ENCODE measurements at regions of chr17 and their contacts with region 1.

Region 1: GRCh38 chr17:75904749-75905521 is at the start of gene MRPL38:
- DNase-seq: peak; percentile 96
- ATAC-seq: peak; percentile 95
- H3K4me3 ChIP-seq: peak within 1 kb of the TSS; percentile 88 to 100
- H3K27ac ChIP-seq: peak within 1 kb of the TSS; percentile 80
- H3K4me1 ChIP-seq: peaks cover 24 to 36% of the 10 kb centered on the region in 2 experiments
- H3K27me3 ChIP-seq: no peaks in the 10 kb centered on the region
- CTCF ChIP-seq: peak; percentile 98
- POLR2A ChIP-seq: peak; percentile 34
- RAD21 ChIP-seq: peak; percentile 100
- total RNA-seq, gene MRPL38: 219 TPM

Region 2: GRCh38 chr17:75877752-75878173 is 27.2 kb before region 1 on chr17:
- CTCF ChIA-PET with region 1: interaction called, 10 read pairs
- POLR2A ChIA-PET with region 1: interaction called, 4 read pairs
- RAD21 ChIA-PET with region 1: no interaction called
- intact Hi-C with region 1: no loop called
- DNase-seq: no peak
- ATAC-seq: peak; percentile 49
- H3K4me3 ChIP-seq: peak overlapping the region; percentile 69 to 81
- H3K27ac ChIP-seq: peak overlapping the region; percentile 99
- H3K4me1 ChIP-seq: peaks cover 44 to 62% of the 10 kb centered on the region in 2 experiments
- H3K27me3 ChIP-seq: no peaks in the 10 kb centered on the region
- CTCF ChIP-seq: peak in 2 of 3 experiments; percentile 37 to 49; a peak in 3 of 6 replicates
- POLR2A ChIP-seq: peak; percentile 13
- RAD21 ChIP-seq: no peak

Region 3: GRCh38 chr17:75940724-75941441 is 35.9 kb after region 1 on chr17 and contains the start of gene FBF1:
- CTCF ChIA-PET with region 1: interaction called, 5 read pairs
- POLR2A ChIA-PET with region 1: interaction called, 4 read pairs
- RAD21 ChIA-PET with region 1: no interaction called
- intact Hi-C with region 1: loop called (anchors 1 kb)
- DNase-seq: peak; percentile 94
- ATAC-seq: peak; percentile 99
- H3K4me3 ChIP-seq: peak within 1 kb of the TSS; percentile 67 to 88
- H3K27ac ChIP-seq: peak within 1 kb of the TSS; percentile 69
- H3K4me1 ChIP-seq: peaks cover 10 to 17% of the 10 kb centered on the region in 2 experiments
- H3K27me3 ChIP-seq: no peaks in the 10 kb centered on the region
- CTCF ChIP-seq: no peak
- POLR2A ChIP-seq: peak; percentile 97
- RAD21 ChIP-seq: no peak
- total RNA-seq, gene FBF1: 22.8 TPM

Region 4: DNA sequence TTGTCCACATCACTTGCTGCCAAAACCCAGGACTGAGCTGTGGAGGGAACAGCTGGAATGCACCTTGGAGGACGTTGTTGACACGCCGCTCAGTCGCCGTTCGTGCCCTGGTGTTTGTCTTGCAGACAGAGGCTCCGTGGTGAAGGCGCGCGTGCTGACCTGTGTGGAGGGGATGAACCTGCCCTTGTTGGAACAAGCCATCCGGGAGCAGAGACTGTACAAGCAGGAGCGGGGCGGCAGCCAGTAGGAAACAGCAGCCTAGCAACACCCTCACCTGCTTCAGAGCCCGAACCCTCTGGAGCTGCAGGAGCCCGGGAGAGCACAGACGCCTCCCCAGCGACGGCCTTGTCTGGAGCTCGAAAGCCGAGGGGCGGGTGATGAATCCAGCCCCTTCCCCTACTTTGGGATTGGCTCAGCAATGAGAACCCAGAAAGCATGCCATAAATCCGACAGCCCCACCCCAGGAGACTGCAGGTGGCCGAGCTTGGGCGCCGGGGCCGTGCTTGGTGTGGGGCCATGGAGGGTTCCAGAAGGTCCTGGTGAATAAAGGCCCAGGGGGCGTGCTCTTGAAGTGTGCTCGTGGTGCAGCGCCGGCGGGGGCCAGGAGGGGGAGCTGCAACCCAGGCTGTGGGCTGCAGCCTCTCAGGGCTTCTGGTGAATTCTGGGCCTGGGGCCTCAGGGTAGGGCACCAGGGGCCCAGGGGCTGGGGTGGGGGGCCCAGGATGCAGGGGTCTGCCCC is 95.2 kb after region 1 on chr17:
- CTCF ChIA-PET with region 1: interaction called, 68 read pairs
- POLR2A ChIA-PET with region 1: interaction called, 11 read pairs
- RAD21 ChIA-PET with region 1: interaction called, 5 to 7 read pairs
- intact Hi-C with region 1: loop called (anchors 1 kb)
- DNase-seq: peak; percentile 33
- ATAC-seq: peak; percentile 86
- H3K4me3 ChIP-seq: no peak overlapping the region
- H3K27ac ChIP-seq: peak overlapping the region; percentile 28; the same call in 1 of the 2 replicates
- H3K4me1 ChIP-seq: peaks cover 12 to 36% of the 10 kb centered on the region in 2 experiments
- H3K27me3 ChIP-seq: no peaks in the 10 kb centered on the region
- CTCF ChIP-seq: peak; percentile 93 to 99 (median 99)
- POLR2A ChIP-seq: no peak
- RAD21 ChIP-seq: peak; percentile 85

Region 5: DNA sequence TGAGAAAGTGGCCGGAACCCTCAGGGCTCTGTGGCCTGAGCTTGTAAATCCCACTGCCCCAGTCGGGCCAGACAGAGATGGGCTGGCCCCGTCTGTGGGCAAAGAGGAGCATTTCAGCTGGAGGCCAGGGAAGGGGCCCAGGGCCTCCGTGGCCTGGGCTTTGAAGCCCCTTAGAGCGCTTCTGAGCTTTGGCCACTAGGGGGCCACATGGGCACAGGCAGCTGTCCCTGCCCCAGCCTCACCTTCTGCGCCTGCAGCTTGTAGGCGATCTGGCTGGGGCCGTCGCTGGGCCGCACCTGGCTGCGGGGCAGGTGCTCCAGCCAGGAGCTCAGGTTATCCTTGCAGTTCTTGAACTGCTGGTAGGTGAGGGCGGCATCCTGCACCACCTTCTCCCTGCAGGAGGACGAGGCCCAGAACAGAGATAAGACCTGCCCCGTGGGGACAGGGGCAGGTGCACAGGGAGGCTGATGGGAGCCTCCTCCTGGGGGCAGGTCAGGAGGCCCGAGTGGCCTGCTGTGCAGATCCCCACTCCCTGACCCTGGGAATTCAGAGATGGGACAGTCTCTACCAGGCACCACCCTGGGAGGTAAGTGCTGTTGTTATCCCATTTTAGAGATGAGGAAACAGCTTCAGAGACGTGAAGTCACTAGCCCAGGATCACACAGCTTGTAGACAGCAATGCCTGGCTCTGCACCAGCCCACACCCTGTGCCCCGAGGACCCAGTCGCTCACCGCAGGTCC is 109.4 kb after region 1 on chr17:
- CTCF ChIA-PET with region 1: interaction called, 68 read pairs
- POLR2A ChIA-PET with region 1: no interaction called
- RAD21 ChIA-PET with region 1: no interaction called
- intact Hi-C with region 1: no loop called
- DNase-seq: peak; percentile 46
- ATAC-seq: peak; percentile 94
- H3K4me3 ChIP-seq: no peak overlapping the region
- H3K27ac ChIP-seq: peak overlapping the region; percentile 12; the same call in 1 of the 2 replicates
- H3K4me1 ChIP-seq: peaks cover 0 to 3% of the 10 kb centered on the region in 2 experiments; a peak in 1 of 4 replicates
- H3K27me3 ChIP-seq: no peaks in the 10 kb centered on the region
- CTCF ChIP-seq: peak; percentile 92 to 99 (median 98)
- POLR2A ChIP-seq: no peak
- RAD21 ChIP-seq: peak; percentile 98

Region 6: GRCh38 chr17:76246080-76247066 is 341.4 kb after region 1 on chr17:
- CTCF ChIA-PET with region 1: no interaction called
- POLR2A ChIA-PET with region 1: no interaction called
- RAD21 ChIA-PET with region 1: no interaction called
- intact Hi-C with region 1: no loop called
- DNase-seq: no peak
- ATAC-seq: no peak
- H3K4me3 ChIP-seq: no peak overlapping the region
- H3K27ac ChIP-seq: no peak overlapping the region
- H3K4me1 ChIP-seq: peaks cover 0 to 13% of the 10 kb centered on the region in 2 experiments; a peak in 3 of 4 replicates
- H3K27me3 ChIP-seq: no peaks in the 10 kb centered on the region
- CTCF ChIP-seq: no peak
- POLR2A ChIP-seq: no peak
- RAD21 ChIP-seq: no peak

Region 7: DNA sequence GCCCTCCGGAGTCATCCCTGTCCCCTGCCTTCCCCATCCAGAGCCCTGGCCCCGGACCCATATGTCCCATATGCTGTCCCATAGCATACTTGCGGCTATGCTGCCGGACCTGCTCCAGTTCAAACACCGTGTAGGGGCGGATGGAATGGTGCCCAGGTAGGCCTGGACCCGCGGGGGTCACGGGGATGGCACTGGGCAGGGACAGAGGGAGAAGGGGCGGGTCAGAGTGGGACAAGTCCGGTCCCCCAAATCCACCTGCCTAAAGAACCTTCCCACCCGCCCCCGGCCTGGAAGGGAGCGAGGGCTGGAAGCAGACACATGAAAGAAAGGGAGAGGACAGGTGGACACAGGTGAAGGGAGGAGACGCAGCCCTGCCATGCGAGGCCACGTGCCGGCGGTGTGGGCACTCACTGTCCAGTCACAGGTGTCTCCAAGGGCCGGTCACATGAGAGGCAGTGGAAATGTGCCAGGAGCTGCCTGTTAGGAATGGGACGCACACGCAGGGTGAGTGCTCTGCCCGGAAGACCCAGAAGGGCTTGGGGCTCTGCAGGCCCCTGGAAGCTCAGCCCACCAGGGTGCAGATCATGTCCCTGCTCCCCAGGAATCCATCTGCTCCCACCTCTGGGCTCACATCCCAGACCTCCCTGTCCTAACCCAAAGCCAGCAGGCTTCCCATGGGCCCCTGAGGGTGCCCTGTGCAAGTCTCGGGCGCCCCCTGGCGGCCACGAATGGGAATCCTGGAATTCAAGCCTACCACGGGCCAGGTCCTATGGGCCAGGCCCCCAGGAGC is 374.2 kb after region 1 on chr17:
- CTCF ChIA-PET with region 1: interaction called, 10 read pairs
- POLR2A ChIA-PET with region 1: no interaction called
- RAD21 ChIA-PET with region 1: no interaction called
- intact Hi-C with region 1: loop called (anchors 1 kb)
- DNase-seq: peak; percentile 62
- ATAC-seq: peak; percentile 98
- H3K4me3 ChIP-seq: no peak overlapping the region
- H3K27ac ChIP-seq: no peak overlapping the region; the same call in 1 of the 2 replicates
- H3K4me1 ChIP-seq: peaks cover 0 to 15% of the 10 kb centered on the region in 2 experiments; a peak in 2 of 4 replicates
- H3K27me3 ChIP-seq: no peaks in the 10 kb centered on the region
- CTCF ChIP-seq: peak; percentile 98 to 100 (median 98)
- POLR2A ChIP-seq: no peak
- RAD21 ChIP-seq: peak; percentile 100

Region 8: DNA sequence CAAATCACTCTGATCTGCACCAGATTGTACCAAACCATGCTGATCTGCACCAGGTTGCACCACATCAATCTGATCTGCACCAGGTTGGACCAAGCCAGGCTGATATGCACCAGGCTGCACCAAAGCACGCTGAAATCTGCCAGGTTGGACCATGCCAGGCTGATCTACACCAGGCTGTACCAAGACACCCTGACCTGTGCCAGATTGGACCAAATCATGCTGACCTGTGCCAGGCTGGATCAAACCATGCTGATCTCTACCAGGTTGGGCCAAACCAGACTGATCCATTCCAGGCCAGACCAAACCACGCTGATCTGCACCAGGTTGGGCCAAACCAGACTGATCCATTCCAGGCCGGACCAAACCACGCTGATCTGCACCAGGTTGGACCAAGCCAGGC is 387.6 kb after region 1 on chr17:
- CTCF ChIA-PET with region 1: no interaction called
- POLR2A ChIA-PET with region 1: no interaction called
- RAD21 ChIA-PET with region 1: no interaction called
- intact Hi-C with region 1: no loop called
- DNase-seq: no peak
- ATAC-seq: no peak
- H3K4me3 ChIP-seq: no peak overlapping the region
- H3K27ac ChIP-seq: no peak overlapping the region
- H3K4me1 ChIP-seq: no peaks in the 10 kb centered on the region
- H3K27me3 ChIP-seq: no peaks in the 10 kb centered on the region
- CTCF ChIP-seq: no peak
- POLR2A ChIP-seq: no peak
- RAD21 ChIP-seq: no peak

Measured in HCT116 (cell line).